ENCODE measurements at regions of chrX and their contacts with region 1.

Region 1: DNA sequence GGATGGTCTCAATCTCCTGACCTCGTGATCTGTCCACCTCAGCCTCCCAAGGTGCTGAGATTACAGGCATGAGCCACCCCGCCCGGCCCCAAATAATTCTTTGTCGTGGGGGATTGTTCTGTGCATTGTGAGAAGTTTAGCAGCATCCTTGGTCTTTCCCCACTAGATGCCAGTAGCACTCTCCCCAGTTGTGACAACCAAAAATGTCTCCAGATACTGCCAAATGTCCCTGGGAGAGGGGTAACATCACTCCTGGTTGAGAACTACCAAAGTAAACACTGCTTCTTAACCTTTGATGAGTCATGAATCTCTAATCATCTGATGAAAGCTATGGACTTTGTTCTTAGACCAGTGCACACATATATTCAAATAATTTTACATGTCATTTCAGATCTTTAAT is 90.7 kb upstream of the BRS3 start:
- DNase-seq: no peak

Region 2: DNA sequence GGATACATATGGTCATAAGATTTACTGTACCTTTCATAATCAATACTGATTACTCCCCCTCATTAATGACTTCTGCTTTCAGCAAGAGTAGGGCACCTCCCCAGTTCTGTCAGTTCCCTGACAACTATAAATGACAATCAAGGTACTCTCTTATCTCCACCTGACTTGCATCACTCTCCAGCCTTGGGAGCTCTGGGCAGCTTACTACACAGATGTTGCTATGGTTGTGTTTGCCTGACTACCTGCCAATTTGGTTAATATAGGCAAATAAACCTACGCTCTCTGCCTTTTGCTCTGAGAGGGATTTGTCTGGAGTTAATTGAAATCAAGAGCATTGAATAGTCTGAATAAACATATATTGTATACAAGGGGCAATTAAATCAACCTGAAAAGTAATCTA is 123.0 kb before region 1 on chrX:
- CTCF ChIA-PET with region 1: no interaction called
- POLR2A ChIA-PET with region 1: no interaction called
- DNase-seq: no peak

Region 3: DNA sequence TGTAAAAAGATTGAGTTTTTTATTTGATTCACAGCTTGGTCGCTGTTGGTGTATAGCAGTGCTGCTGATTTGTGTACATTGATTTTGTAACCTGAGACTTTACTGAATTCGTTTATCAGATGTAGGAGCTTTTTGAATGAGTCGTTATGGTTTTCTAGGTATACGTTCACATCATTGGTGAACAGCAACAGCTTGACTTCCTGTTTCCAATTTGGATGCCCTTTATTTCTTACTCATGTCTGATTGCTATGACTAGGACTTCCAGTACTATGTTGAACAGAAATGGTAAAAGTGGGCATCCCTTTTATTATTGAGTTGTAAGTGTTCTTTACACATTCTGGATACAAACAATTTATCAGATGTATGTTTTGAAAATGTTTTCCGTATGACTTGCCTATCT is 20.3 kb before region 1 on chrX:
- CTCF ChIA-PET with region 1: no interaction called
- POLR2A ChIA-PET with region 1: no interaction called
- DNase-seq: no peak

Region 4: GRCh38 chrX:136386826-136387225 is 10.2 kb before region 1 on chrX:
- CTCF ChIA-PET with region 1: no interaction called
- POLR2A ChIA-PET with region 1: no interaction called
- DNase-seq: no peak

Region 5: GRCh38 chrX:136456133-136456532 is 59.1 kb after region 1 on chrX:
- CTCF ChIA-PET with region 1: interaction called, 10 read pairs
- POLR2A ChIA-PET with region 1: no interaction called
- DNase-seq: no peak

Region 6: DNA sequence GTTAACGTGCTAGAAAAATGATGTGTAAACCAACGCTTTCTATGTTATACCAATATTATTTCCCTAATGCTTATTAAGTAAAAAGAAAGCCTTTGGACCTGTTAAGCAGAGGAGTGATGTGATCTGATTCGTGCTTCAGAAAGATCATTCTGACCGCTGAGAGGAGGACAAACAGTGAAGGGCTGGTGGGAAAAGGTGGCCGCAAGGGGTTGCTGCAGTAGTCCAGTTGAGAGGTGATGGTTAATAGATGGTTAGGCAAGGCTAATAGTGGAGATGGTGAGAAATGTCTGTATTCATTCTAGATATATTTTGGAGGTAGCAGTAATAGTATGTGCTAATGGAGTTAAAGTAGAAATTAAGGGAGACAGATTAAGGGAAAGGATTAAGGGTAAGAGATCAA is 122.1 kb after region 1 on chrX:
- CTCF ChIA-PET with region 1: no interaction called
- POLR2A ChIA-PET with region 1: no interaction called
- DNase-seq: no peak